Activated CD8-positive, alpha-beta memory T cell treated with anti-CD3 and anti-CD28 coated beads, Interleukin-2, amount 10 ng/mL, durations not matched to agents 7 days and 5 days (primary cell): ENCODE measurements at regions of chr1 and their contacts with region 1.

Region 1: DNA sequence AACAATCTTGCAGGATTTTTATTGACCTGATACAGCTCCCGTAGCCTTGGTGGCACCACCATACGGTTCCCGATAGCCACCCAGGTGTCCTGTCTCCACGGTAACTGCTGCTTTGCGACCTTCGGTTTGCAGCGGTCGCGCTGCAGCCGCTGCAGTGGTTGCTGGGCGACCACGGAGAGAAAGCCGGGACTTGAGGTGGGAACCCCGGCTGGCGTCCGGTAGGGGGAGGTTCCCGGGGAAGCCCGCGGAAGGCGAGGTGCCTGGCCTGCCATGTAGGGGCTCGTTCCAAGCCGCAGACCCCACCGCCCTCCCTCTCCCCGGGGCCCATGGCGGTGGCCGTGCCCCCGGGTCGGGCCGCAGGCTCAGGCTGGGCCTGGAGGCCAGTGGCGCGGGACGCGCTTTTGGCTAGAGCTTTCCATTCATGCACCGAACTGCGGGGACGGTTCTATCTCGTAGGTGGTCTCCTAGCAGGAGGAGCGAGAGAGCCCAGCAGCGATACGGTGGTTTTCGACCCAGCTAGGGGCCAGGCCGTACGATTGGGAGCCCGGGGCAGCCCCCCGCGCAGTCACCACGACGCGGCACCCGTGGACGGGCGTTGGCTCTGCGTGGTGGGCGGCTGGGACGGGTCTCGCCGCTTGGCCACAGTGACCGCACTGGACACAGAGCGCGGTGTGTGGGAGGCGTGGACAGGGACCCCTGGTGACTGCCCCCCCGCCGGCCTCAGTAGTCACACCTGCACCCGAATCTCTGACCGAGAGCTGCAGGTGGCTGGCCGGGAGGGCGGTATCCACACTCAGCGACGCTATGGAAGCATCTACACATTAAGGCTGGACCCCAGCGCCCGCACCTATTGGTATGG is at the start of gene KLHDC9:
- DNase-seq: peak; percentile 90
- ATAC-seq: peak; percentile 77
- H3K4me3 Mint-ChIP-seq: peak within 1 kb of the TSS; percentile 89
- H3K27ac Mint-ChIP-seq: peak within 1 kb of the TSS; percentile 86
- H3K4me1 Mint-ChIP-seq: peaks cover 22% of the 10 kb centered on the region
- H3K27me3 Mint-ChIP-seq: no peaks in the 10 kb centered on the region
- total RNA-seq, gene KLHDC9: 0.52 to 0.85 TPM

Region 2: GRCh38 chr1:160971618-160972056 is 126.8 kb before region 1 on chr1:
- CTCF ChIA-PET with region 1: no interaction called
- DNase-seq: no peak
- ATAC-seq: peak; percentile 47
- H3K4me3 Mint-ChIP-seq: no peak overlapping the region
- H3K27ac Mint-ChIP-seq: no peak overlapping the region
- H3K4me1 Mint-ChIP-seq: peaks cover 2% of the 10 kb centered on the region
- H3K27me3 Mint-ChIP-seq: peaks cover 14% of the 10 kb centered on the region

Region 3: DNA sequence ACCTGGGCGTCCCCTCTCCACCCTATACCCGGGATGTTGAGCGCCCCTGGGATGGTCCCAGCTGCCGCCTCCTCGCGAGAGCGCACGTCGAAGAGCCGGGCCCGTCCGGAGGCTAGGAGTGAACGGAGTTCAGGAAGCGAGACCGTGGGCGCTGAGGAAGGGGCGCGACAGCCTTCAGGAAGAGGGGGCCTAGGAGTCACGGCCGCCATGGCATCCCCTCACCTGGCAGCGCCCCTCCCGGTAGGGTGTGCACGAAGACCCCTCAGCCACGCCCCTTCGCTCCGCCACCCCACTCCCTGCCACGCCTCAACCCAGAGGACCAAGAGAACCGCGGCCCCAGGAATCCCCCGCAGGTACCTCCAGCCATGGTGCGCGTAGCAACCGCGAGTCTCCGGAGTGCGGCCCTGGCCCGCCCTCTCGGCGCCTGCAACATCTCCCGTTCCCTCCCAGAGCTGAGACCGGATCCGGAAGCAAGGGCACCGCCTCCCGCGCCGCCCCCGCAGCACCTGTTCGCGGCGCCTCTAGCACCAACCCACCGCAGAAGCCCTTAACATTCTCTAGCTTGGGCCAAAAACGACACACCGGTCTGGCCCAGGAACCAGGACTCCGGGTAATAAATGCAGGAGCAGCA is 59.8 kb before region 1 on chr1 and contains the start of gene TSTD1:
- CTCF ChIA-PET with region 1: interaction called, 47 read pairs
- DNase-seq: peak; percentile 90
- ATAC-seq: peak; percentile 92
- H3K4me3 Mint-ChIP-seq: peak within 1 kb of the TSS; percentile 84
- H3K27ac Mint-ChIP-seq: peak within 1 kb of the TSS; percentile 90
- H3K4me1 Mint-ChIP-seq: peaks cover 47% of the 10 kb centered on the region
- H3K27me3 Mint-ChIP-seq: no peaks in the 10 kb centered on the region
- total RNA-seq, gene TSTD1: 62.8 TPM

Region 4: GRCh38 chr1:161071886-161072371 is 26.5 kb before region 1 on chr1:
- CTCF ChIA-PET with region 1: interaction called, 154 read pairs
- DNase-seq: peak; percentile 72
- ATAC-seq: no peak
- H3K4me3 Mint-ChIP-seq: no peak overlapping the region
- H3K27ac Mint-ChIP-seq: peak overlapping the region; percentile 50
- H3K4me1 Mint-ChIP-seq: peaks cover 45% of the 10 kb centered on the region
- H3K27me3 Mint-ChIP-seq: no peaks in the 10 kb centered on the region

Region 5: DNA sequence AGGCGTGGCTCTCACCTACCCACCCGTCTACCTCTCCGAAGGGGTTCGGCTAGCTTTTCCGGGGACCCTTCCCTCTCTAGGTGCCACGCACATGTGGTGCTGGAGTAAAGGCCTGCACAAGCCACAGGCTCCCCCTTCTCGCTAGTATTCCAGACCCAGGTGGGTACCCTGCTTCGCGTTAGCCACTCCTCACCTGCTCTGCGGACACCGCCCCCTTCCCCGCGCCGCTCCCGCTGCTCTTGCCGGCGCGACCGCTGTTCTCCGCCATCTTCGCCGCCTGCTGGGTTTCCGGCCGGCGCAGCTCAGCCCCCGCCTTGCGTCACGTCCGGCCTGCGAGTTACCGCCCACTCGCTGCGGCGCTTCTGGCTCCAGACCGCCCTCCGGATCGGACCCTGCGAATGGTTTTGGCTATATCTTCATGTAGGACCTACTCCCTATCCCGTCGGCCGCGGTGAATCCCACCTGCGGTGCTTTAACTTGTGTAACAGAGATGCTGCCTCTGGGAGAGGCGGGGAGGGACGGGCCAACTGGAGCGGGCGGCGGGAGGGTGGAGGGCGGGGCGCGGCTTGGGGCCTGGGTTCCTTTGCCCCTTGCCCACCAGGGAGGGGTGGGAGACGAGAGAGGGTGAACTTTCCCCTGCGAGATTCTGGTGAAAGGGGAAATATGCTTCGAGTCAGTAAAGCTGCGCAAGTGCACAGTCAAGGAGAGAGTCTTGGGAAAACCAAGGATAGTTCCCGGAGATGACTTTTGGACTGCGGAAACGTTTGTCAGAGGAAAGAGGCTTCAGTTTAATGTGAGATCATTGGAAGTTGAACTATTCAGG is 19.5 kb after region 1 on chr1 and contains the starts of genes NIT1 and PFDN2:
- CTCF ChIA-PET with region 1: interaction called, 11 read pairs
- DNase-seq: peak; percentile 92
- ATAC-seq: peak; percentile 84
- H3K4me3 Mint-ChIP-seq: peak within 1 kb of the TSS; percentile 93
- H3K27ac Mint-ChIP-seq: peak within 1 kb of the TSS; percentile 96
- H3K4me1 Mint-ChIP-seq: peaks cover 63% of the 10 kb centered on the region
- H3K27me3 Mint-ChIP-seq: no peaks in the 10 kb centered on the region
- total RNA-seq, gene NIT1: 36.4 to 40.9 TPM
- total RNA-seq, gene PFDN2: 82.8 to 98.5 TPM